Tibial artery (tissue), 4 donors: ENCODE measurements at regions of chr17 and their contacts with region 1.

Region 1: GRCh38 chr17:63549946-63550807 is at the start of gene DCAF7:
- DNase-seq: peak; percentile 100
- H3K4me3 ChIP-seq: peak within 1 kb of the TSS; percentile 84 to 85
- H3K27ac ChIP-seq: peak within 1 kb of the TSS; percentile 95
- H3K4me1 ChIP-seq: peaks cover 0 to 50% (median 19%) of the 10 kb centered on the region in 4 donors
- H3K27me3 ChIP-seq: no peaks in the 10 kb centered on the region
- CTCF ChIP-seq: no peak

Region 2: GRCh38 chr17:63621766-63622519 is 71.8 kb after region 1 on chr17 and contains the start of gene MAP3K3:
- intact Hi-C with region 1: loop called (anchors 5 kb)
- DNase-seq: peak; percentile 100
- H3K4me3 ChIP-seq: peak within 1 kb of the TSS; percentile 67 to 88
- H3K27ac ChIP-seq: peak within 1 kb of the TSS; percentile 82
- H3K4me1 ChIP-seq: peaks cover 0 to 37% (median 19%) of the 10 kb centered on the region in 4 donors
- H3K27me3 ChIP-seq: no peaks in the 10 kb centered on the region
- CTCF ChIP-seq: no peak